Left lung (tissue), 14 donors: ENCODE measurements at regions of chr15 and their contacts with region 1.

Region 1: DNA sequence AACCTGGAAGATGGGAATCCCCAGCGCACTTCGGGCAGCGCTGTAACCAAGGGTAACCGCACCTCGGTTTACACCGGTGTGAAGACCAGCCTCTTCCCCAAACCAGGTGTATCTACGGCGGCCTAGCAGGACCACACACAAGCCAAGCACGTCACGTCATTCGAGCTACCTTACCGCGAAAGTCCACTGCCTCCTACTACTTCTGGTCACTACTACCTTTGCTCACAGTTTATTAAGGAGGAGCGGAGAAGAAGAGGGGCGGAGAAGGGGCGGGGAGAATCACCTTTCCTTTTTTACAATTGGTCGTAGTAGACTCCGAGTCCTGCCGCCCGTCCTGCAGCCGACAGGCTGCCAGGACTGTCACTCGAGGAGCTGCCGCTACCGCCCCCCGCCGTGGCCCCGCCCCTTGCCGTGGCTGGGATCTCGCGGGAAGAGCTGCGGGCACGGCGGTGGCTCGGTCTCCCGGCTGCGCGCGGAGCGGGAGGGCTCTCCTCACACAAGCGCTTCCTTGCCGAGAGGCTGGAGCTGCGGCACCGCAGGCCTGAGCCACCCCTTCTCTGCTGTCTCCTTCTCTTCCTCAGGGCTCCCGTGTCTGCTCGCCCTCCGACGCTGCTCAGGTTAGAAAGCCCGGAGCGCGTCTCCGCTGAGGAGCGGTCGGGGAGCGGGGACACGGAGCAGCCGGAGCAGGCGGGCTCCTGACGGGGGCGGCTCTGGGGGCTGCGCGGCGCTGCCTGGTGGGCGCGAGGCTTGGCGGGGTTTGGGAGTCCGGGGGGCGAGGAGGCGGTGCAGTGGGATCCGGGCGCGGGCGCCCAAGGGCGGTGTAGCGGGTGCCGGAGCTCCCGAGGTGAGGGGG is at the start of gene GLCE:
- DNase-seq: peak; percentile 93 to 98 (median 97)
- ATAC-seq: peak; percentile 98
- H3K4me3 ChIP-seq: peak within 1 kb of the TSS; percentile 58 to 81
- H3K27ac ChIP-seq: peak within 1 kb of the TSS; percentile 62 to 68
- H3K4me1 ChIP-seq: peaks cover 6 to 14% of the 10 kb centered on the region in 2 donors
- H3K27me3 ChIP-seq: peaks cover 0 to 9% of the 10 kb centered on the region in 2 donors
- CTCF ChIP-seq: no peak
- polyA plus RNA-seq, gene GLCE: 55.3 to 66.6 (median 61.4) TPM

Region 2: DNA sequence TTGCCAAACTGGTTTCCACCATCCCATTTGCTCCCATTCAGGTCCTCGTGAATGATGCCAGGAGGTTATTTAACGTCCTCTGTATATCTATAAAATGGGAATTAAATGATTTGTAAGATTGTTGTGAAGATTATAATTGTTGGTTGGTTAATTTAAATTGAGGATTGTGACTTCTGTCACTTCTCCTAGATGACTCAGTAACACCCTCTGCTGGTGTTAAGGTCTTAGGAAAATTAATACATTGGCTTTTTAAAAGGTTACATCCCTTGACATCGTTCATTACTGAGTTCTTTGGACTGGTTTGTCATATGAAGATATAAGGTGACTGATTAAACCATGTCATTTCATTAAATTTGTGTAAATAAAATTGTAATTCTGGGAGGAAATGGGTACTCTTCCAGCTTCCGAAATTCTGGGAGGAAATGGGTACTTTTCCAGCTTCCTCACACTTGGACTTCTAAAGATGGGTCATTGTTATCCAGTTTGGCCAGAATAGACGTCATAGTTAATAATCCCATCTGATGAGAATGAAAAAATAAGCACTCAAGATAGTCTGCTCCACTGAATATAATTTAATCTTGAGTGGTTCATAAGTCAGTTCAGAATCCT is 105.1 kb after region 1 on chr15:
- intact Hi-C with region 1: loop called in 1 of 2 experiments (anchors 10 kb)
- DNase-seq: peak in 1 of 4 donors; percentile 31
- ATAC-seq: peak; percentile 64
- H3K4me3 ChIP-seq: no peak overlapping the region
- H3K27ac ChIP-seq: no peak overlapping the region
- H3K4me1 ChIP-seq: no peaks in the 10 kb centered on the region
- H3K27me3 ChIP-seq: no peaks in the 10 kb centered on the region
- CTCF ChIP-seq: peak in 1 of 2 donors; percentile 29